ENCODE measurements at regions of chr6 and their contacts with region 1.

Region 1: GRCh38 chr6:90179190-90180169 is 117.2 kb downstream of the BACH2 start:
- DNase-seq: peak in 4 of 9 experiments; percentile 29 to 65 (median 41)
- ATAC-seq: no peak
- H3K4me3 ChIP-seq: no peak overlapping the region
- H3K4me3 Mint-ChIP-seq: no peak overlapping the region
- H3K27ac ChIP-seq: no peak overlapping the region
- H3K27ac Mint-ChIP-seq: peak overlapping the region; percentile 94
- H3K4me1 ChIP-seq: peaks cover 67% of the 10 kb centered on the region
- H3K4me1 Mint-ChIP-seq: peaks cover 84% of the 10 kb centered on the region
- H3K27me3 ChIP-seq: no peaks in the 10 kb centered on the region
- H3K27me3 Mint-ChIP-seq: no peaks in the 10 kb centered on the region
- CTCF ChIP-seq: peak; percentile 73

Region 2: DNA sequence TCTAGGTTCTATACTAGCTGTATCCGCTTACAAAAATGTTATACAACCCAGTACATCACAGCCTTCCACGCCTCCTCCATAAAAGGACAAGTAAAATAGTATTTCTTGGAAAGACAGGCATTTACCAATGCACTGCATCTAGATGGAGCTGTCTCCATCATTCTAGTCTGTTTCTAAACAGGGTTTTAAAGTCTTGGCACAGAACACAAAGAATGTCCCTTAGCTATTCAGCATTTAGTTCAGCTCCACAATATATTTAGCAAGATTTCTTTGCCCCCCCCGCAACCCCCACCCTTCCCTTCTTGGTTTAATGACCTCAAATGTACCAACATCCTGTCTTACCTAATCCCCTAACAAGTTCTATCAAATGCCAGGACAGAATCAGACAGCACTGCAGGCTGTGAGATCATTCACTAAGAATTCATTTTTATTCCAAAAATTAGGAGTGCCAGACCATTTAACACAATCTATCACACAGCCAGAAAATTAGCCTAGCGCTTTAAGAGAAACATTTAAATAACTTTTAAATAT is 81.4 kb before region 1 on chr6:
- CTCF ChIA-PET with region 1: interaction called, 3 read pairs
- POLR2A ChIA-PET with region 1: no interaction called
- intact Hi-C with region 1: loop called in 1 of 2 experiments (anchors 5 kb)
- DNase-seq: peak in 4 of 9 experiments; percentile 24 to 64 (median 44)
- ATAC-seq: peak; percentile 74
- H3K4me3 ChIP-seq: no peak overlapping the region
- H3K4me3 Mint-ChIP-seq: no peak overlapping the region
- H3K27ac ChIP-seq: no peak overlapping the region
- H3K27ac Mint-ChIP-seq: peak overlapping the region; percentile 79
- H3K4me1 ChIP-seq: peaks cover 65% of the 10 kb centered on the region
- H3K4me1 Mint-ChIP-seq: peaks cover 78% of the 10 kb centered on the region
- H3K27me3 ChIP-seq: no peaks in the 10 kb centered on the region
- H3K27me3 Mint-ChIP-seq: no peaks in the 10 kb centered on the region
- CTCF ChIP-seq: no peak

Region 3: GRCh38 chr6:90131614-90132423 is 47.7 kb before region 1 on chr6:
- CTCF ChIA-PET with region 1: interaction called, 6 read pairs
- POLR2A ChIA-PET with region 1: interaction called, 4 read pairs
- intact Hi-C with region 1: loop called in 1 of 2 experiments (anchors 5 kb)
- DNase-seq: no peak
- ATAC-seq: no peak
- H3K4me3 ChIP-seq: no peak overlapping the region
- H3K4me3 Mint-ChIP-seq: no peak overlapping the region
- H3K27ac ChIP-seq: no peak overlapping the region
- H3K27ac Mint-ChIP-seq: peak overlapping the region; percentile 79
- H3K4me1 ChIP-seq: peaks cover 40% of the 10 kb centered on the region
- H3K4me1 Mint-ChIP-seq: peaks cover 65% of the 10 kb centered on the region
- H3K27me3 ChIP-seq: no peaks in the 10 kb centered on the region
- H3K27me3 Mint-ChIP-seq: no peaks in the 10 kb centered on the region
- CTCF ChIP-seq: no peak

Region 4: DNA sequence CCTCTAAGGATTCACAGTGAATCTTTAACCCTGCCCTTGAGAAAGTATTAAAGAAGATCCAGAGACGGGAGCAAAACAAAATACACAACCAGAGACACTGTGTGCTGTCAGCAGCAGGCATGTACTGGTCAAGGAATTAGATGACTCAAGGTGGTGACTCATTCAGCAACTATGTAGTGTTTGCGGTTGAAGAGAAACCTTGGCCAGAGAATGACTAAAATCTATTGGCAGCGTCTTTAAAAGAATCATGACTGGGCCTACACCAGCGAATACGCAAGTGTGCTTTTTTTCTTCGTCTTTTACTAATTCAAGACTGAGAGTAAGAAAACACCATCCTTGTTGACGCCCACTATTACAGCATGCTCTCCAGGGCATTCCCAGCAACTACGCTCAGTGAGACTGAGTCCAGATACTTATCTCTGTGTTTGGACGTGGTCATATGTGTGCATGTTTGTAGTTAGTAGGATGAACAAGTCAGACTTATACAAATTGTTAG is 189.6 kb after region 1 on chr6:
- CTCF ChIA-PET with region 1: no interaction called
- POLR2A ChIA-PET with region 1: no interaction called
- intact Hi-C with region 1: no loop called
- DNase-seq: peak in 3 of 9 experiments; percentile 17 to 60 (median 55)
- ATAC-seq: peak; percentile 78
- H3K4me3 ChIP-seq: no peak overlapping the region
- H3K4me3 Mint-ChIP-seq: no peak overlapping the region
- H3K27ac ChIP-seq: no peak overlapping the region
- H3K27ac Mint-ChIP-seq: no peak overlapping the region
- H3K4me1 ChIP-seq: no peaks in the 10 kb centered on the region
- H3K4me1 Mint-ChIP-seq: peaks cover 11% of the 10 kb centered on the region
- H3K27me3 ChIP-seq: no peaks in the 10 kb centered on the region
- H3K27me3 Mint-ChIP-seq: no peaks in the 10 kb centered on the region
- CTCF ChIP-seq: no peak

Measured in CD8-positive, alpha-beta T cell (primary cell).